Activated naive CD8-positive, alpha-beta T cell treated with anti-CD3 and anti-CD28 coated beads, Interleukin-2, amount 10 ng/mL, durations not matched to agents 7 days and 5 days (primary cell): ENCODE measurements at regions of chr1 and their contacts with region 1.

Region 1: DNA sequence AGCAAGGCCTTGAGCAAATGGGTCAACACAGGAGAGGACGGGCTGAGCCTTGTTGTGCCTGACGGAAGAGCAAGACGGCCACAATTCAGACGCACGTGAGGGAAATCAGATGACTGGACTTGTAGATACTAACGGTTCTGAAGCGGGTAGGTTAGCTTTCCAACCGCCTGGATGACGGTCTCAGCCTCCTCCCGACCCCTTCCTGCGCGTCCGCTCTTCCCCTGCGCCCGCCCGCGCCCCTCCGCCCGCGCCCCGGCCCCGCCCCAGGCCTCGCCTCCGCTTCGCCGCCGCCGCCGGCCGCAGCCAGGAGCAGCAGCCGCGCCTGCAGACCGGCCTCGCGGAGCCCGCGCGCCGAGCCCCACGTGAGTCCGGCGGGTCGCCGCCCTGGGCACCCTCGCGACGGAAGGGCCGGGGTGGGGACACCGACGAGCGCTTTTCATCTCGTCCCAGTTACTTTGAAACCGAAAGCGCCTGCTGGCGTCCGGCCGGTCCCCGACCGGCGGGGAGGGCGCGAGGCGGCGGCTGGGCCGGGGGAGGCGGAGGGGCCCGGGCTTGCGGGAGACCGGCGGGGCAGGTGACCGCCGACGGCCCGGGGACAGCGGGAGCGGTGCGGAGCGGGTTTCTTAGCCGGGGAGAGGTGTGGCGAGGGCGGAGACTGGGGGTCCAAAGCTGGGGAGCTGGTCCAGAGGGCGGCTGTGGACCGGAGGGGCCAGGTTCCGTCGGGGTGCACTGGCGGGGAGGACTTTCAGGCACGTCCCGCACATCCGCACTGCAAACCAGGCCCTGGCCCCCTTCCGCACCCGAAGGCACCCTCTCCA is at the start of gene TRAF5:
- DNase-seq: peak; percentile 77
- ATAC-seq: peak; percentile 37
- H3K4me3 Mint-ChIP-seq: peak within 1 kb of the TSS; percentile 92
- H3K27ac Mint-ChIP-seq: peak within 1 kb of the TSS; percentile 95
- H3K4me1 Mint-ChIP-seq: peaks cover 62% of the 10 kb centered on the region
- H3K27me3 Mint-ChIP-seq: no peaks in the 10 kb centered on the region
- total RNA-seq, gene TRAF5: 82.2 to 84.0 TPM

Region 2: DNA sequence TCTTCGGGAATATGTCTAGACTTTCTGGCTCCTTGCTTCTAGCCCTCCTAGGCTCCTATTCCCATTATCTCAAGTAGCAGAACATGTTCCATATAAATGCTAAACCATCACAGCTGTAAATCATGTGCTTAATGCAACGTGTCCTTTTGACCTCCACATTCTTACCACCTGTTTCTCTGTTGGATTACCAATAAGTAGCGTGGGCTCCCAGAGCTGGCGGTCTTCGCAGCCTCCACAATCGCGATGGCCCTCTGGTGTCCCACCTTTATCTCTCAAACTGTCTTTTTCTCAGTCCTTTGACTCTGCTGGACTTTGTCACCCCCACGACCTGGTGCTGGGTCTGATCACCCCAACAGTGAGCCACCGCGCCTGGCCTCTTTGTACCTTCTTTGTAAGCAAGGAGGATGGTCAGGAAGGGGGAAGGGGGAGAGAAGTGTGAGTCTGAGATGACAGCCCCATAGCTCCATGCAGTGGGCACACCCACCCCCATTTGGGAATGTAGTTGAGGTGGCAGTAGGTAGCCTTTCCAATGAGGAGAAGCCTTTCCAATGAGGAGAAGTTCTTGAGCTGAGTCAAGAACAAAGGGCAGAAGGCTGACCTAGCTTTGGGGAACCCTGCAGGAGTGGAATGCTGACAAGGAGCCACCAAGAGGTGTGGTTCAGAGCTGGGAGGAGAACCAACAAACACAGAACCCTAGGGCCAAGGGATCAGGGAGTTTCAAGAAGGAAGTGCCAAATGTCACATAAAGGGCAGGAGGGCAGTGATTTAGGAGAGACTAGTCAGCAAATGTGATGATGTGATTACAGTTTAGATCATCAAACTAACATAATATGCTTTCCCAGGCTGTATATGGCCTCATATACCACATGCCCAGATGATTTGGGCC is 14.1 kb after region 1 on chr1:
- POLR2A ChIA-PET with region 1: interaction called, 18 read pairs
- DNase-seq: no peak
- ATAC-seq: no peak
- H3K4me3 Mint-ChIP-seq: peak overlapping the region; percentile 10
- H3K27ac Mint-ChIP-seq: no peak overlapping the region
- H3K4me1 Mint-ChIP-seq: peaks cover 57% of the 10 kb centered on the region
- H3K27me3 Mint-ChIP-seq: no peaks in the 10 kb centered on the region

Region 3: DNA sequence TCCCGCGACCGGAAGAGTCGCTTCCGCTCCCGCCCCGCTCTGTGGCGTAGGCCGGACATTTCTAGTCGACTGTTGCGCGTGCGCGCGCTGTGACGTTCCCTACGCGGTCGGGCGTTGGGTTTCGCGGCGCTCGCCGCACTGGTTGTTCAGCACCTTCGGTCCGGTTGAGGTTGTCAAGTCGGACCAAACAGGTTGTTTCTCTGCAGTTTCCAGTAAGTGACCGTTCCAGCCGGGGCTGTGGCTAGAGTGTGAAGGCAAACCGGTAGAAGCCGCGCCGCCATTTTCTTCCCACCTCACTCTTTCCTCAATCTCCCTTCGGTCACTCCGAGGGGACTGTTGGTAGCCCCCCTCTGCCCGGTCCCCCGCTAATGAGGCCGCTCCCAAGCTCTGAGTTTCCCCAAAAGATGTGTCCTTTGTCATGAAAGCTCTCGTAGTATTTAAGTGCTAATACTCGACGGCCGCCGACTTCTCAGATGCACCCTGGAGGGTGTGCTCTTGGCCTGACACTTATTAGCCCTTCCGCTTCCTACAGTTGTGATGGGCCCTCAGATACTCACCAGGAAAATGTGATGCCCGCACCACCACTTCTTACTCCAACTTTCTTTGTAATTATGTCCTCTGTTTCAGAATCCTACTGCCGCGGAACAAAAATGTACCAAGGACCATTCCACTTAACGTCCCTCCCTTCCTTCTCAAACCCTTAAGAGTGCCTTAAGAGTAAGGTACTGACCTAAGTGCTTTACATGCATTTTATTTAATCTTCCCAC is 56.2 kb after region 1 on chr1:
- POLR2A ChIA-PET with region 1: interaction called, 17 read pairs
- DNase-seq: peak; percentile 87
- ATAC-seq: peak; percentile 94
- H3K4me3 Mint-ChIP-seq: peak overlapping the region; percentile 90
- H3K27ac Mint-ChIP-seq: peak overlapping the region; percentile 93
- H3K4me1 Mint-ChIP-seq: peaks cover 21% of the 10 kb centered on the region
- H3K27me3 Mint-ChIP-seq: peaks cover 7% of the 10 kb centered on the region